ENCODE measurements at regions of chr11 and their contacts with region 1.

Region 1: GRCh38 chr11:23540101-23540561 is 679.9 kb upstream of the CCDC179 start:
- DNase-seq: peak; percentile 61
- H3K4me3 ChIP-seq: no peak overlapping the region
- H3K27ac ChIP-seq: no peak overlapping the region
- H3K4me1 ChIP-seq: peaks cover 7% of the 10 kb centered on the region
- H3K27me3 ChIP-seq: no peaks in the 10 kb centered on the region
- CTCF ChIP-seq: peak; percentile 67 to 74
- POLR2A ChIP-seq: no peak

Region 2: DNA sequence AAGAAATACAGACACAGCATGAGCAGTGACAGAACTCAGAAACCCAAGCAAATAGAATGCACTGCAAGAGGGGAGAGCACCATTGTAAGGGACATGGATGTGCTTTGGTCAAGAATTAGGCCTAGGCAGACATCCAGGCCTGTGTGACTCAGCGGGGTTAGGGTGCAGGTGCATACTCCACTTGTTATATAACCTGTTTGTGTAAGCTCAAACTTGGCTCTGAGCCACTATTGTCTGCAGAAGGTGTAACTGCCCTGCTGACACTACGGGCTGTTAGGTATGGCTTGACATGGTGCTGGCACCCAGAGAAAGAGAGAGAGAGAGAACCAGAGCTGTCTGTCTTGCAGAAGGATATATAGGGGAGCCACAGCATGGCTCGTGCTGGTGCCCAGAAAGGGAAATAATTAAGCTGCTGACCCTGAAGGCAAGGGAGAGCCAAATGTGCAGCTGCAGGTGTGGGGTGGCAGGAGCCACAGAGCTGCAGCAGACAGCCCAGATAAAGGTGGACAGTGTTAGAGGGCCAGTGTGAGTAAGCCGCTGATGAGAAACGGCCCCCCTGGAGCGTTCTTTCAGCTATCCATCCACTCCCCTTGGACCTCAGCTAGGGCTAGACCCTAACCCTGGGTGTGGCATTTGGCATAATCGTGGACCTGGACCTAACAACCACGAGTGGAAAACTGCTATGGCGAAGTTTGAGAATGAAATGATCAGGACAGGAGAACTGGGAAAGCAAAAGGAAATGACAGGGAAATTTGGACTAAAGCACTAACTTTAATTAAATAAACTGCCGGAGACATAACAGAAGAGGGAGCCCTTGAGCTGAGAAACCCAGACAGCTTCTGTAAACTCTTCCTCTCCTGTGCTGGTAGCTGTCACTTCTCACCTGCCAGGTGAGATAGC is 426.9 kb before region 1 on chr11:
- CTCF ChIA-PET with region 1: interaction called, 57 read pairs
- POLR2A ChIA-PET with region 1: no interaction called
- dilution Hi-C with region 1: no loop called
- intact Hi-C with region 1: loop called (anchors 1 kb)
- DNase-seq: peak; percentile 73
- H3K4me3 ChIP-seq: no peak overlapping the region
- H3K27ac ChIP-seq: no peak overlapping the region
- H3K4me1 ChIP-seq: peaks cover 3% of the 10 kb centered on the region
- H3K27me3 ChIP-seq: no peaks in the 10 kb centered on the region
- CTCF ChIP-seq: peak; percentile 56 to 62
- POLR2A ChIP-seq: no peak

Region 3: GRCh38 chr11:23555085-23555484 is 15.0 kb after region 1 on chr11:
- CTCF ChIA-PET with region 1: interaction called, 11 read pairs
- POLR2A ChIA-PET with region 1: no interaction called
- dilution Hi-C with region 1: no loop called
- intact Hi-C with region 1: no loop called
- DNase-seq: peak; percentile 57
- H3K4me3 ChIP-seq: no peak overlapping the region
- H3K27ac ChIP-seq: peak overlapping the region; percentile 68
- H3K4me1 ChIP-seq: peaks cover 10% of the 10 kb centered on the region
- H3K27me3 ChIP-seq: no peaks in the 10 kb centered on the region
- CTCF ChIP-seq: no peak
- POLR2A ChIP-seq: no peak

Region 4: DNA sequence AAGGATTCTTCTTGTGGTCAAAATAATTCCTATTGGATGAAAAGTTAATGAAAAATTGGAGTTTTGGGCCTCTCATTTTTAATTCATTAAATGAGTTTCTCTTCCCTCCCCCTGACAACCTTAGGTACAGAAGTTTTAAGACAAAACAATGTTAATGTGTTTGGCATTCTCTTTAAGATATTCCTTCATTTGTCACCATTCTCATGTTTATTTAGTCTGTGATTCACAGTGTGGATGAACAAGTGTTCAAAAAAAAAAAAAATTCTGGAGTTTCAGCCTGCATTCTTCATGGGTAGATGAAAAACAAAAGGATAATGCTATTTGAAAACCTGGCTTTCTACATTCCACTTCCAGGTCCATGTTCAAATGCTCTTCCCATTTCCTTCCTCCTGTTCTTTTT is 784.1 kb after region 1 on chr11:
- CTCF ChIA-PET with region 1: interaction called, 31 read pairs
- POLR2A ChIA-PET with region 1: no interaction called
- dilution Hi-C with region 1: no loop called
- intact Hi-C with region 1: loop called (anchors 10 kb)
- DNase-seq: peak; percentile 55
- H3K4me3 ChIP-seq: no peak overlapping the region
- H3K27ac ChIP-seq: no peak overlapping the region
- H3K4me1 ChIP-seq: peaks cover 7% of the 10 kb centered on the region
- H3K27me3 ChIP-seq: no peaks in the 10 kb centered on the region
- CTCF ChIP-seq: no peak
- POLR2A ChIP-seq: no peak

Region 5: DNA sequence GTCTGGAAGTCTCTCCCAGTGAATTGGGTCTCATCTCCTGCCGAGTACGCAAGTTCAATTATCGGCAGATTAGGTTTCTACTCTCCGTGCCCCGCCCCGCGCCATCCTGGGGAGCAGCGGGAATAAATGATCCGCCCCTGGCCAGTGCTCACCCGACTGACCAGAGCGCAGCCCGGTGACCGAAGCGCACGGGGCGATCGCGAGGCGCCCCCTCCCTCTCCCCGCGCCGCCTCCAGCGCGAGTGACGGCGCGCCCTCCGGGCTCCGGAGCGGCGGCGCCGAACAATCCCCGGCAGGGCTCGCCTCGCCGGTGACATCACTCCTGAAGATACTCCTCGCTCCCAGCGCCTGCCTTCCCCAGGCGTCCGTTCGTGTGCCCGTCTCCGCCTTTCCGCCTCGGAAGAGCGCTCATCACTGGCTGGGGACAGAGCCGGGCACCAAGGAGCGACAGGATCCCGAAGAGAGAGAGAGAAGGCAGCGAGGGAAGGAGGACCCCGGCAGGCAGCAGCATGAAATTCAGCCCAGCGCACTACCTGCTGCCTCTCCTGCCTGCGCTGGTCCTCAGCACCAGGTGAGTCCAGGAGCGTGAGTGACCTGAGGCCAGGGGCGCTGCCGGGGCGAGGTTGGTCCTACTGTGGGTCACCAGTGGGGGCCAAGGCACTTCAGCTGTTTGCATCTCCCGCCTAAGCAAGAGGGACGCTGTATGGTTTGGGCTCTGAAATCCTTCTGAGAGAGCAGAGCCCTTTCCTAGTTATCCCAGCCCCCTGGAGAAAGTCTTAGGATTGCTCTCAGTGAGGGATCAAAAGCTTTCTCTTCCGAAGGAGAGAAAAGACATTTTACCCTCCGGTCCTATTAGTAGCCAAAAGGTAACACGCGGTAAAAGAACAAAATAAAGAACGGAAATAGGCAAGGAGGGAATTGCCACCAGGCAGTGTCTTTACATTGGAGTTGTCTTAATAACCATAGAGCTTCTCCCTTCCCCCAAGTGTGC is 956.9 kb after region 1 on chr11 and contains the start of gene LUZP2:
- CTCF ChIA-PET with region 1: no interaction called
- POLR2A ChIA-PET with region 1: no interaction called
- dilution Hi-C with region 1: no loop called
- intact Hi-C with region 1: loop called (anchors 2 kb)
- DNase-seq: peak; percentile 42
- H3K4me3 ChIP-seq: peak within 1 kb of the TSS; percentile 23 to 54 (median 38)
- H3K27ac ChIP-seq: no peak within 1 kb of the TSS
- H3K4me1 ChIP-seq: peaks cover 9% of the 10 kb centered on the region
- H3K27me3 ChIP-seq: peaks cover 25 to 41% of the 10 kb centered on the region in 2 experiments
- CTCF ChIP-seq: no peak
- POLR2A ChIP-seq: no peak
- total RNA-seq, gene LUZP2: 0.07 and 0.23 TPM in 2 replicates